OCI-LY7 (cell line): ENCODE measurements at regions of chr9 and their contacts with region 1.

Region 1: DNA sequence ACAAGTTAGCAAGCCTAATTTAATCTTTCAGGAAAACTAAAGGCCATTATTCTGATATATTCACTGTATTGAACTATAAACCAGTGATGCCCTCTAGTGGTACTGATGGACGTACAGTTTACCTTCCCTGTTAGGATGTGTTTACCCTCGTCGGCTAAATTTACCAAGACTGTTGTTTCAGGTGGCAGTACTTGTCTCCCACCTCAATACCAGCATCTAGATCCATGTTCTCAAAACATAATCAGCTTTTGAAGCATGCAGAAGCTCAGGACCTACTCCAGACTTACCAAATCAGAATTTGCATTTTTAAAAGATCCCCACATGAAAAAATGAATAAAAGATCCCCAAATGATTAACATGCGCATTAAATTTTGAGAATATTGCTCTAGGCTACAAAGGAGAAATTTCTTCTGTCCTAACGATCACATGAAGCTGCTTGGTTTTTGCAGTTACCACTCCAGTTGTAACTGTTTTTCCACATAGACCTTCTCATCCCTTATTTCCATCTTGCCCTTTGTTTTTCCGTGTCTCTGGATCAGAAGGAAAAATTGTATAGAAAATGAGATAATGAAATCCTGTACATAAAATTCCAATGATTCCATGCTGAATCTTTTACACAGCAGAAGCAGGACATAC is 3.2 kb upstream of the BAAT start:
- DNase-seq: peak; percentile 54
- H3K4me3 ChIP-seq: no peak overlapping the region
- H3K27ac ChIP-seq: no peak overlapping the region
- H3K4me1 ChIP-seq: no peaks in the 10 kb centered on the region
- CTCF ChIP-seq: peak; percentile 83

Region 2: GRCh38 chr9:100341889-100342288 is 1046.1 kb before region 1 on chr9:
- CTCF ChIA-PET with region 1: no interaction called
- POLR2A ChIA-PET with region 1: no interaction called
- intact Hi-C with region 1: no loop called
- DNase-seq: no peak
- H3K4me3 ChIP-seq: no peak overlapping the region
- H3K27ac ChIP-seq: no peak overlapping the region
- H3K4me1 ChIP-seq: peaks cover 14% of the 10 kb centered on the region
- CTCF ChIP-seq: no peak

Region 3: GRCh38 chr9:101398068-101398929 is 10.3 kb after region 1 on chr9 and contains the starts of genes MRPL50 and ZNF189:
- CTCF ChIA-PET with region 1: no interaction called
- POLR2A ChIA-PET with region 1: interaction called, 15 read pairs
- intact Hi-C with region 1: no loop called
- DNase-seq: peak; percentile 97
- H3K4me3 ChIP-seq: peak within 1 kb of the TSS; percentile 95
- H3K27ac ChIP-seq: peak within 1 kb of the TSS; percentile 54
- H3K4me1 ChIP-seq: peaks cover 28% of the 10 kb centered on the region
- CTCF ChIP-seq: no peak
- total RNA-seq, gene MRPL50: 17.7 and 18.5 TPM in 2 replicates
- total RNA-seq, gene ZNF189: 11.0 and 11.7 TPM in 2 replicates